ENCODE measurements at regions of chr11 and their contacts with region 1.

Region 1: GRCh38 chr11:10307442-10308207 is 2.8 kb downstream of the ADM start:
- H3K4me3 Mint-ChIP-seq: peak overlapping the region; percentile 84
- H3K27ac Mint-ChIP-seq: peak overlapping the region; percentile 75
- H3K4me1 Mint-ChIP-seq: peaks cover 63% of the 10 kb centered on the region
- H3K27me3 Mint-ChIP-seq: peaks cover 25% of the 10 kb centered on the region

Region 2: DNA sequence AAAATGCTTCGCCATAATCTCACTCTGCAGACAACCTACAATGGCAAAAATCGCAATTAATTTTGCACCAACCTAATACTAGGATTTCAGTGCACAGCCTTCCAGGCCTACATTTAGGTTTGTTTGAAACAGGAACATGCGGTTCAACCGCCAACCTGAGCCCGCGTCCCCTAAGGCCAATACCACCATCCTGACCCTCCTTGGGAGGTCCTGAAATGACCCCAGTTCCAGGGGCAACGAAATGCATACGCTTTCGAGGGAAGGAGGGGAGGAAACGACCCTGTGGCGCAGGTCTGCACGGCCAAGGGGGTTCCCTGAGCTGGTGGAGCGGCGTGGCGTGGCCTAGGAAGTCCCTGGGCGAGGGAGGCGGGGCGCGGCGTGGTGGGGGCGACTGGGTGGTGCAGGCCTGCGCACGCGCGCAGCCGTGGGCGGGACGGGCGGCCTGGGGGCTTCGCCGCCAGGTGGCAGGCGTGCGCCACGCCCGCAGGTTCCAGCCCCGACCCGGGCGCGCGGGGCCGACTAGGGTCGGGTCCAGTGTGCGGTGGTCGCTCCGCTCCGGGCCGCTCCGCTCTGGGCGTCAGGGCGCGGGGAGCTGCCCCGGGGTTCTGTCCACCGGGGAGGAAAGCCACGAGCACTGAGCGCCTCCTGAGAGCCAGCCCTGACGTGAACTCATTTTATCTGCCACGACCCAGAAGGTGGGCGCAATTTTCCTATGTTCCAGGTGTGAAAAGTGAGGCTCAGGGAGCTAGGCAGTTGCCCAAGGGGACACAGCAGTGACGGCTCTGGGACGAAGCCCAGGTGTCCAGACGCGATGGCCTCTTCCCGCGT is 549.6 kb before region 1 on chr11:
- intact Hi-C with region 1: loop called (anchors 5 kb)
- H3K4me3 Mint-ChIP-seq: peak overlapping the region; percentile 75
- H3K27ac Mint-ChIP-seq: peak overlapping the region; percentile 62
- H3K4me1 Mint-ChIP-seq: peaks cover 40% of the 10 kb centered on the region
- H3K27me3 Mint-ChIP-seq: peaks cover 3% of the 10 kb centered on the region

Region 3: GRCh38 chr11:9861860-9862725 is 445.5 kb before region 1 on chr11:
- intact Hi-C with region 1: loop called (anchors 5 kb)
- H3K4me3 Mint-ChIP-seq: no peak overlapping the region
- H3K27ac Mint-ChIP-seq: no peak overlapping the region
- H3K4me1 Mint-ChIP-seq: no peaks in the 10 kb centered on the region
- H3K27me3 Mint-ChIP-seq: no peaks in the 10 kb centered on the region

Region 4: DNA sequence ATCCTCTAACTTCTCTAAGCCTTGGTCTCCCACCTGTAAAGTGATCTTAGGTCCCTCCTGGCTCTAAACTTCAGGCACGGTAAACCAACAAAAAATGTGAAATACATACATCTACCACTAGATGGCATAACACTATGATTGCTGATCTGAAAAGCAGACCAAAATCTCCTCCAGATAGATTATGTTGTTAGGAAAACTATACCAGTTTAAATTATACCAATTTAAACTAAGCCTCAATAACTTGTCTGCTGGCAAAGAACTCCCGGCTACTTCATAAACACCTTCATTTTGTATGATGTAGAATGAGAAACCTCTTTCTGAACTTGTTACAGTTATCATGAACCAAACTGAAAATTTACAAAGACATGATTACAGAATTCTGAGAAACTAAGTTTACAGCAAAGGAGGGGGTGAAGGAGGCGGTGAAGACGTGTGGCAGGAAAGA is 99.5 kb before region 1 on chr11:
- intact Hi-C with region 1: loop called (anchors 1 kb)
- H3K4me3 Mint-ChIP-seq: no peak overlapping the region
- H3K27ac Mint-ChIP-seq: no peak overlapping the region
- H3K4me1 Mint-ChIP-seq: peaks cover 10% of the 10 kb centered on the region
- H3K27me3 Mint-ChIP-seq: no peaks in the 10 kb centered on the region

Region 5: GRCh38 chr11:10272132-10272531 is 35.5 kb before region 1 on chr11:
- intact Hi-C with region 1: no loop called
- H3K4me3 Mint-ChIP-seq: no peak overlapping the region
- H3K27ac Mint-ChIP-seq: no peak overlapping the region
- H3K4me1 Mint-ChIP-seq: peaks cover 12% of the 10 kb centered on the region
- H3K27me3 Mint-ChIP-seq: no peaks in the 10 kb centered on the region

Region 6: DNA sequence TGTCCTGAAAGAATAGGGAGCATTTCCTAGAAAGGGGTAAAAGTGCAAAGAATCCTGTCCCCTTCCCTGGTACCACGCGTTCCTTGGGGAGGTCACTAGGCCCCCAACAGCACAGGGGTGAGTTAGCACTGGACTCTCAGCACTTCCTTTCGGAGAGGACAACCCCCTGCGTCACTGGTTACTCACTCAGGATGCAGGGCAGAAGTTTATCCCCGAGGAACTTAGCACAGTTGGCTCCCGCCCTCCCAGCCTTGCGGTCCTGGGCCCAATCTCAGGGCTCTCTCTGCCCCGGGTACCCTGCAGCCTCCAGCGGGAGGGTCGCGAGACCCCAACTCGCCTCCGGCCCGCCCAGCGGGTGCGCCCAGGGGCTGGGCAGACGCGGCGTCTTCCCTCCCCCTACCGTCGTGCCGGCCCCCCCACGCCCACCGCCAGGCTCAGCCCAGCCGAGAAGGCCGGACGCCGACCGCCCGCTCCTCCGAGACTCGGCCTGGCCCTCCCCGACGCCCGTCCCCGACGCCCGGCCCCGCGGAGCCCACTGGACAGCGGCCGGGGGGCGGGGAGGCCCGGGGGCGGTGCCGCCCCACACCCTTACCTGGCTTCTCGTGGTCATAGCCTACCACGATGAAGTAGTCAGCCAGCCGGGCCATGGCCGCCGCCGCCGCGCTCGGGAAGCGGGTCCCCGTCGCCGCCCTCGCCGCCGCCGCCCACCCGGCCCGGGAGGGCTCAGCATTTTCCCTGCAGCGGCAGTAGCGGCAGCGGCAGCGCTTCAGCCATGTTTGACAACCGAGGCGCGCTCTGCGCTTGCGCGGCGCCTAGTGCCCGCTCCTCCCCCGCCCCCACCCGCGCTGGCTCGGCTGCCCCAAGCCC is 14.0 kb before region 1 on chr11 and contains the start of gene SBF2:
- intact Hi-C with region 1: loop called (anchors 1 kb)
- H3K4me3 Mint-ChIP-seq: peak within 1 kb of the TSS; percentile 79
- H3K27ac Mint-ChIP-seq: peak within 1 kb of the TSS; percentile 85
- H3K4me1 Mint-ChIP-seq: peaks cover 64% of the 10 kb centered on the region
- H3K27me3 Mint-ChIP-seq: no peaks in the 10 kb centered on the region

Region 7: GRCh38 chr11:10366568-10367370 is 59.1 kb after region 1 on chr11:
- intact Hi-C with region 1: loop called (anchors 1 kb)
- H3K4me3 Mint-ChIP-seq: no peak overlapping the region
- H3K27ac Mint-ChIP-seq: peak overlapping the region; percentile 24
- H3K4me1 Mint-ChIP-seq: peaks cover 15% of the 10 kb centered on the region
- H3K27me3 Mint-ChIP-seq: peaks cover 4% of the 10 kb centered on the region

Region 8: DNA sequence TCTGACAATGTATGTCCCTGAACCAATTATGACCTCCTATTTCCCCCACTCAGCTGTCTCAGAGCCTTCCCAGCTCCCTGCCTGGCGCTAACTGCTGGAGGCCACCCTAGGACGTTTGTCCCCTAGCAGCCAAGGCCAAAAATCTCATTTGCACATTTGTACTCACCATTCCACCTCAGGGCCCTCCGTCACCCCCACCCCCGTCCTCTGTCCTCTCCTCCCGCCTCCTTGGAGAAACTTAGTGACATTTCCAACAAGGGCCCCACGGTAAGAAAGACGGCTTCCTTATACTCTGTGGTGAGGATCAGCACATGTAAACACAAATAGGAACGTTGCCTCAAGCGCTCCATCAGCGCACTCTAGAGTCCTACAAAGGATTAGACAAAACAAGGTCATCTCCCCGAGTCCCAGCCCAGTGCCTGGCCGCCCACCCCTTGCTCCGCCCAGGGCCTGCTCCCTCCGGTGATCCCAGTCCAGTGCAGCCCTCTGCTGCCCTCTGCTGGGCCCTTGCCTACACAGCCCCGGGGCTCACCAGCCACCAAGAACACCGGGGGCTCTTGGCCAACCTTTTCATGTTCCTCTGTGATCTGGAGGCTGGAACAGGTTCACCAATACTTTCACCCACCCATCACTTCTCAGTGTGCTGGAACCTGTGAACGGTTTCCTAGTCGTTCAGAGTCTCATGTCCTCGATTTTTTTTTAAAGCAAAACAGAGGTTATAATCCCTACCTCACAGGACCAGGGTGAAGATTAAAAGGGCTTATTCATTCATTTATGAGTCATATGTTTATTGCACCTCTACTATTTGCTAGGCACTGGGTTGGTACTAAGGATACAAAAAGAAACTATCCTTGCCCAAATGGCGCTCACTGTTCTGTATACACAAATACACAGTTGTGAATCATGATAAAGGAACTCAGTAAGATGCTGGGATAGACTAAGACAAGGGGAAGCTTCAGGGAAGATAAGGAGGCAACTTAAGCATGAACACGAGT is 428.2 kb after region 1 on chr11:
- intact Hi-C with region 1: loop called (anchors 5 kb)
- H3K4me3 Mint-ChIP-seq: no peak overlapping the region
- H3K27ac Mint-ChIP-seq: peak overlapping the region; percentile 19
- H3K4me1 Mint-ChIP-seq: peaks cover 16% of the 10 kb centered on the region
- H3K27me3 Mint-ChIP-seq: peaks cover 25% of the 10 kb centered on the region

Measured in dendritic cell treated with granulocyte-macrophage colony-stimulating factor and Interleukin-4, amounts not matched to agents 40 ng/mL and 50 ng/mL, for 4 days (primary cell).